ENCODE measurements at regions of chr1 and their contacts with region 1.

Region 1: DNA sequence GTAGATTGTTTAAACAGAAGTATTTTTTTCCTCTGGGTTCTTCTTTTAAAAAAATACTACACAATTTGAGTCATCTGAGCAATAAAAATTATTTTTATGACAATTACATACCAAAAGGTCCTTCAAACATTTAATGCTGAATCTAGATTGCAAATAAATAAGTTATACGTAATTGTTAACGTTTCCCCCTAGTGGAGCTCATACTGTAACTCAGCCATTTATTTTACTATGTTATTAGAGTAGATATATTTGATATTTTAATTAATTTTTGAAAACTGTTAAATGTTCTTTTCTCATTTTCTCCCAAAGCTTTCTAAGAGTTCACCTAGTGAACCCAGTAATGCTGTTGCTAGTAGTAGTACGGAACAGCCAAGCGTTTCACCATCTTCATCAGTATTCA is 33.5 kb downstream of the ZMYM1 start:
- DNase-seq: peak; percentile 17 to 50 (median 47)
- H3K4me3 ChIP-seq: no peak overlapping the region
- H3K27ac ChIP-seq: no peak overlapping the region
- H3K4me1 ChIP-seq: no peaks in the 10 kb centered on the region
- H3K27me3 ChIP-seq: no peaks in the 10 kb centered on the region

Region 2: DNA sequence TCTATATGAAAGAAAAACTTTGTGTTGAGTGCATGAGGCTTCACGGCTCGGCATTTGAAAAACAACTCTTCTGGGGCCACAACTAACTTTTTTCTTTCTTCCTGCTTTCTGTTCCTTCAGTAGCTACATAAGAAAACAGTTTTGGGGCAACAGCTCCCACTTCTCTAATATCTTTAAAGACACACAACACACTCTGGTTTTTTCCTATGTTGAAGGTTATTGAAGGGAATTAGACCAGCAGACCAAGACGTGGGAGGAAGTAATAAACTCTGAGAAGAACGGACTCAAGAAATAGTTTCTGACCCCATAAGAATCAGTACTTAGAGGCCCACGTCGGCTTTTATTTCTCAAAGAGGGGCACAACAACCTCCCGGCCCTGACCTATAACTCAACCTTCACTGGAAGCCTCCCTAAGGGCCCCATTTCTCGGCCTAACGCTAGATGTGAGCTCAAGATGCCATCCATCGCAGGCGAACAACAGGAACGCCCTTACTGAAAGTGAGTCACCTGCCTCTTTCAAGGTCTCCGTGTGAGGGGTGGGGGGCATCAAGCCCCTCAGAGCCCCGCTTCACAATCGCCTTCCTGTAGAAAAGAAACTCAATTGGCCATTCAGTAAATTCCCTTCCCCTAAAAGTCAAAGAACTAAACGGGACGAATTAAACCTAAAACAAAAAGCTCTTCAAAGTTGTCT is 81.8 kb before region 1 on chr1:
- CTCF ChIA-PET with region 1: interaction called, 13 read pairs
- POLR2A ChIA-PET with region 1: no interaction called
- DNase-seq: peak; percentile 54 to 83 (median 74)
- H3K4me3 ChIP-seq: peak overlapping the region; percentile 75 to 99 (median 95)
- H3K27ac ChIP-seq: peak overlapping the region; percentile 90 to 95
- H3K4me1 ChIP-seq: peaks cover 13 to 26% (median 14%) of the 10 kb centered on the region in 4 experiments
- H3K27me3 ChIP-seq: no peaks in the 10 kb centered on the region

Region 3: DNA sequence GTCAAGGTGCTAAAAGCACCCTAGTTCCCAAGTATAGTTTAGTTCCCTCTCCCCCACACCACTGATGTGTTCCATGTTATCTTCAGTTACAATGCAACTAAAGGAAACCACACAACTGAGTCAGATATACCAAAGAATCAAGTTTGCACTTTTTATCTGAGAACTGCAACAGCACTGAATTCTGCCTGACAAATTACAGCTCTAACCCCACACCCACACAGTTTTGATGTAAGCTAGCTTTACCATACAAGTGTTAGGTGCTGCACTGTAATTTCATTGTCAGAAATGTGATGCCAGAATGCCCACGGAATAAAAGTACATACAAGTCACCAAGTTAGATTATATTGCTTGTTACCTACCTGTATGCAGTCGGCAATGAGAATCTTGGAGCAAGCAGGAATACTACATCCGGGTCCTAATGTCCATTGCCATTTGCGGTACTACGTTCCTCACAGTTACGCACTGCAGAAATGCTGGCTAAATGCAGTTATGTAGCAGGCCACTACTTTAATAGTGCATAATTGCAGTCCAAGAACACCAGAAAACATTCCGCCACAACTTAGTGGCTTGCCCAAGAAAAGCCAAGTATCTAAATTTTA is 68.2 kb after region 1 on chr1:
- CTCF ChIA-PET with region 1: no interaction called
- POLR2A ChIA-PET with region 1: no interaction called
- DNase-seq: peak in 2 of 3 donors; percentile 51 to 62
- H3K4me3 ChIP-seq: no peak overlapping the region
- H3K27ac ChIP-seq: no peak overlapping the region
- H3K4me1 ChIP-seq: peaks cover 0 to 8% (median 3%) of the 10 kb centered on the region in 4 experiments
- H3K27me3 ChIP-seq: no peaks in the 10 kb centered on the region